ENCODE measurements at regions of chr2 and their contacts with region 1.

Region 1: GRCh38 chr2:27303093-27304025 is 4.9 kb downstream of the UCN start:
- DNase-seq: peak in 1 of 2 donors; percentile 67
- ATAC-seq: peak; percentile 64 to 72
- H3K4me3 ChIP-seq: peak overlapping the region in 3 of 4 donors; percentile 5 to 20 (median 12)
- H3K27ac ChIP-seq: peak overlapping the region; percentile 58 to 99 (median 92)
- H3K4me1 ChIP-seq: peaks cover 14 to 38% of the 10 kb centered on the region in 2 donors
- H3K27me3 ChIP-seq: peaks cover 0 to 4% (median 2%) of the 10 kb centered on the region in 3 donors
- CTCF ChIP-seq: peak; percentile 82 to 89 (median 86)
- POLR2A ChIP-seq: no peak

Region 2: GRCh38 chr2:27264753-27265535 is 38.4 kb before region 1 on chr2:
- in situ Hi-C with region 1: no loop called
- intact Hi-C with region 1: loop called (anchors 1 kb)
- DNase-seq: no peak
- ATAC-seq: peak; percentile 29 to 34
- H3K4me3 ChIP-seq: peak overlapping the region; percentile 18 to 78 (median 46)
- H3K27ac ChIP-seq: no peak overlapping the region
- H3K4me1 ChIP-seq: peaks cover 25 to 26% of the 10 kb centered on the region in 2 donors
- H3K27me3 ChIP-seq: peaks cover 65 to 68% (median 66%) of the 10 kb centered on the region in 3 donors
- CTCF ChIP-seq: peak; percentile 39 to 60 (median 46)
- POLR2A ChIP-seq: no peak